A549 (cell line): ENCODE measurements at regions of chr1 and their contacts with region 1.

Region 1: GRCh38 chr1:203504397-203505250 is 10.7 kb downstream of the OPTC start:
- DNase-seq: peak; percentile 75 to 90
- ATAC-seq: peak; percentile 87 to 94
- H3K4me3 ChIP-seq: no peak overlapping the region
- H3K27ac ChIP-seq: peak overlapping the region in 1 of 2 experiments; percentile 24; a peak in 2 of 6 replicates
- H3K4me1 ChIP-seq: peaks cover 22% of the 10 kb centered on the region
- CTCF ChIP-seq: peak; percentile 89
- EP300 ChIP-seq: no peak
- POLR2A ChIP-seq: no peak
- RAD21 ChIP-seq: peak; percentile 87 to 98

Region 2: DNA sequence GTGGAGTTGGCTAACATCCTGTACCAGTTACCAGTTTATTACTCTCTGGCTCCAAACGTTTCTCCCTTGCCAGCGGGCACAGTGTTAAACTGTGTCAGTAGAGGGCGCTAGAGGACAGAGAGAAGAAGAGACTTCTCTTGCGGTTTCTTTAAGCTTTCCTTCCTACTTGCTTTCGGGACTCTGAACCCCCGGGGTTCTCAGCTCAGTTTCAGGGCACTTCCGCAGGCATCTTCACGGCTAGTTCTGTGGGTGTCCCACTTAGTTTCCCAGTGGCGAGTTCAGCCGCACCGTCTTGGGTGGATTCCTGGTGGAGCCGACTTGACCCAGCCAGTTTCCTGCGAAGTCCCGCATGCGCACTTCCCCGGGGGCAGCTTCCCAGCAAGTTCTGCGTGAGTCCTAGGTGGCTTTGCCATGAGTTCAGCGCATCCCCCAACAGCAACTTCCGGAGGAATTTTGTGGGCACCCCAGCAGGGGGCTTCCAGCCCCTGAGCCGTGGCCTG is 237.2 kb before region 1 on chr1:
- CTCF ChIA-PET with region 1: interaction called, 10 read pairs
- POLR2A ChIA-PET with region 1: no interaction called
- DNase-seq: peak; percentile 85 to 89
- ATAC-seq: peak; percentile 76 to 83
- H3K4me3 ChIP-seq: peak overlapping the region; percentile 53
- H3K27ac ChIP-seq: peak overlapping the region; percentile 85 to 91
- H3K4me1 ChIP-seq: peaks cover 7% of the 10 kb centered on the region; the same call in 1 of the 3 replicates
- CTCF ChIP-seq: peak; percentile 95
- EP300 ChIP-seq: no peak
- POLR2A ChIP-seq: peak; percentile 61
- RAD21 ChIP-seq: peak; percentile 77 to 79

Region 3: DNA sequence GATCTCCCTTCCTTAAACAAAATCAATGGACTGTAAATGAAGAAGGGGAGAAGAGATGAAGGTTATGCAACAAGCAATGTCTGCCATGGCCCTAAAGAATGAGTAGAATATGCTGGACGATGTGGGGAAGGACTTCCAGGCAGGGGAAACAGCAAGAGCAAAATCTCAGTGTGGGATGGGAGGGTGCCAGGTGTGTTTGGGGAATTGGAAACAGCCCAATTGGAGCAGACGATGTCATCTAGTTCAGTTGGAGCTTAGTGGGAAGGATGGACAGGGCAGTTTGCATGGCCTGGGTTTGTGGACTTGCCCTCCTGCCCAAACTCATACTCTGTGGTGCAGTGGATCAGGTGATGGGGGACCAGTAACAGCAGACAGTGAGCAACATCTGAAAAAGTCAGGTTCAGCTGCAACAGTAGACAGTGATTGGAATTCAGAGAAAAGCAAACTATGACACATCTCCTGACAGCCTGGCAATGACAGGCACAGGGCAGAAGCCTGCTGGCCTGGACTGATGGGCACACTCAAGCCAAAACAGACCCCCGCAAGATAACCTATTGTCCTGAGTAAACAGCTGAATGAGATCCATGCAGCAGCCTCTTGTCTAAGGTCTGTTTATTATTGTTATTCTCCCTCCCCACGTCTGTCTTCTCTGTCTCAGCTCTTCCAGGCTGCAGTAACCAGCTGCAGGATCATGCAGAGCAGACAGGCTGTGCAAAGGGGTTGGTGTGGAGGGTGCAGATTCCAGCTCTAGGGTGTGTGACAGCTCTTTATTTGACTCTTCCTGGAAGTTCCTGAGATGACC is 79.6 kb before region 1 on chr1:
- CTCF ChIA-PET with region 1: no interaction called
- POLR2A ChIA-PET with region 1: no interaction called
- DNase-seq: no peak
- ATAC-seq: peak; percentile 63 to 72; a peak in 5 of 6 replicates
- H3K4me3 ChIP-seq: no peak overlapping the region
- H3K27ac ChIP-seq: no peak overlapping the region
- H3K4me1 ChIP-seq: peaks cover 13% of the 10 kb centered on the region; the same call in 2 of the 3 replicates
- CTCF ChIP-seq: no peak
- EP300 ChIP-seq: no peak
- POLR2A ChIP-seq: no peak
- RAD21 ChIP-seq: no peak

Region 4: GRCh38 chr1:203473281-203473680 is 31.3 kb before region 1 on chr1:
- CTCF ChIA-PET with region 1: no interaction called
- POLR2A ChIA-PET with region 1: no interaction called
- DNase-seq: no peak
- ATAC-seq: no peak
- H3K4me3 ChIP-seq: no peak overlapping the region
- H3K27ac ChIP-seq: no peak overlapping the region
- H3K4me1 ChIP-seq: no peaks in the 10 kb centered on the region
- CTCF ChIP-seq: no peak
- EP300 ChIP-seq: no peak
- POLR2A ChIP-seq: no peak
- RAD21 ChIP-seq: no peak

Region 5: DNA sequence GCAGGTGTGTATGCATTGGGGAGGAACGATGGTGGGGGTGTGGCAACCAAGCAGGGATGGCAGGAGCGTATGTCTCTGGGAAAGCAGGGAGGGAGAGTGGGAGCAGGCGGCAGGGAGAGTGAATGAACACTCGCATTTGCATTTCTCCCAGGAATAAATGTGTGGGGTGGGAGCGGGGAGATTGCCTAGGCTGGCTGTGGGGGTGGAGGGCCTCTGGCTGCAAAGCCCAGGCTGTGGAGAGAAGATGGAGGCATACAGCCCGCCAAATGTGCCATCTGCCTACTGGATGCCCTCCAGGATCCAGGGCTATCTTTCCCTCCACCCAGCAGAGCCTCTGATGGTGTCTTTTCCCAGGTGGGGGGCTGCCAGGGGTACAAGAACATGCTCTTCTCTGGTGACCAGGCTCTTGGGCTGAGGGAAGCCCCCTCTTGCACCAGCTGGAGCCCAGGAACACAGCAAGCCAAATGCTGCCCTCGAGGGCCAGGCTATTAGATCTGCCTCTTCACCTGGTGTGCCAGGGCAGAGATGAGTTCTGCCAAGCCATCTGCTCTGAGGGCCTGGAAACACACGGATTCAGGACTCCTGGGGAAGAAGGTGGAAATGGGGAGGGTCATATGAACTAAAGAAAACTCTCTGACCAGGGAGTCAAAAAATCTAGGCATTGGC is 12.4 kb before region 1 on chr1:
- CTCF ChIA-PET with region 1: interaction called, 39 read pairs
- POLR2A ChIA-PET with region 1: no interaction called
- DNase-seq: no peak
- ATAC-seq: no peak
- H3K4me3 ChIP-seq: no peak overlapping the region
- H3K27ac ChIP-seq: no peak overlapping the region
- H3K4me1 ChIP-seq: peaks cover 5% of the 10 kb centered on the region; the same call in 1 of the 3 replicates
- CTCF ChIP-seq: no peak
- EP300 ChIP-seq: no peak
- POLR2A ChIP-seq: no peak
- RAD21 ChIP-seq: no peak

Region 6: DNA sequence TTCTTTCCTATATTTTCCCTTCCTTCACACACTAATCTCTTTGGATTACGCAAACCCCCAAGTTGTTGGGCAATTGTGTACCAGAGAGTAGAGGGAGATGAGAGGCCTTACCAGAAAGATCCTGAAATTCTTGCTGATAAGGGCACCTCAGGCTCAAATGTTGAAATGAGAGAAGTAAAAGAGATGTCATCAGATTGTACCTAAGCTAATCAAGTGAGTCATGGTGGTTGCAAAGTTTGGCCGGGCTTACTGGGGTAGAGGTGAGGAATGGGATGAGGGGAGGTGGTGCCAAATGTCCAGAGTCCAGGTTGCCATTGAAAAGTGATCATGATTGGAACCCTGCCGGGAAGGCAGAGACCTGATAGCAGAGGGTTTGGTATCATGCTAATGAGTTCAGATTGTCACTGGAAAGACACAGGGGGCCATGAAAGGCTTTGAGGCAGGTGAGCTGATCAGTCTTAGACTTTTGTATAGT is 32.4 kb after region 1 on chr1:
- CTCF ChIA-PET with region 1: interaction called, 21 read pairs
- POLR2A ChIA-PET with region 1: no interaction called
- DNase-seq: peak in 1 of 2 experiments; percentile 72
- ATAC-seq: peak; percentile 71 to 85
- H3K4me3 ChIP-seq: peak overlapping the region; percentile 14; the same call in 1 of the 3 replicates
- H3K27ac ChIP-seq: peak overlapping the region; percentile 72 to 84
- H3K4me1 ChIP-seq: peaks cover 56% of the 10 kb centered on the region
- CTCF ChIP-seq: no peak
- EP300 ChIP-seq: peak; percentile 68 to 85; a peak in 3 of 5 replicates
- POLR2A ChIP-seq: no peak
- RAD21 ChIP-seq: peak in 1 of 2 experiments; percentile 52; a peak in 2 of 5 replicates

Region 7: DNA sequence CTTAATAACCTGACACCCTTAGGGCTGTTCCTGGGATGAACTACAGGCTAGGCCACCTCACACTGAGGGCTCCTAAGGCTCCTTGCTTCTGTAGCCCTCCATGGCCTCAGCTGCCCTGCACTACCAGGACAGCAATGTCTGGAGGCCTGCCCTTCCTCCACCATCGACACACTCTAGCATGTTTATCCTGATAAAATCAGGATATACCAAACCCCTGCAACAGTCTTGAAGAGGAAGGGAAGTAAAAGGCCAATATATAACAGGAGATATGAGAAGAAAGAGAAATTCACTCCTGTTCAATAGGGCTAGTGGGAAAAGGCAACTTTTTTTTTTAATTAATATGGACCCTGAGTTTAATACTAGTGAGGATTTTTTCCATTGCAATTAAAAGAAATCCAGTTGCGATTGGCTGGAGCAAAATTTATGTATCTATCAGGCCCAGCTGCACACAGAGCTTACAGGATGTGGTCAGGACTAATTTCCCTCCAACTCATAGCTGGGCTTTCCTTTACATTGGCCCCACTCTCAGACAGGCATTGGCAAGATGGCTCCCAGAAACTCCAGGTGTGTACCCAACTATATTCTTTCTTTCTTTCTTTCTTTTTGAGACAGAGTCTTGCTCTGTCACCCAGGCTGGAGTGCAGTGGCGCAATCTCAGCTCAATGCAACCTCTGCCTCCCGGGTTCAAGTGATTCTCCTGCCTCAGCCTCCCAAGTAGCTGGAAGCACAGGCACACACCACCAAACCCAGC is 108.5 kb after region 1 on chr1:
- CTCF ChIA-PET with region 1: interaction called, 50 read pairs
- POLR2A ChIA-PET with region 1: no interaction called
- DNase-seq: no peak
- ATAC-seq: no peak
- H3K4me3 ChIP-seq: no peak overlapping the region
- H3K27ac ChIP-seq: no peak overlapping the region
- H3K4me1 ChIP-seq: no peaks in the 10 kb centered on the region
- CTCF ChIP-seq: no peak
- EP300 ChIP-seq: no peak
- POLR2A ChIP-seq: no peak
- RAD21 ChIP-seq: no peak

Region 8: DNA sequence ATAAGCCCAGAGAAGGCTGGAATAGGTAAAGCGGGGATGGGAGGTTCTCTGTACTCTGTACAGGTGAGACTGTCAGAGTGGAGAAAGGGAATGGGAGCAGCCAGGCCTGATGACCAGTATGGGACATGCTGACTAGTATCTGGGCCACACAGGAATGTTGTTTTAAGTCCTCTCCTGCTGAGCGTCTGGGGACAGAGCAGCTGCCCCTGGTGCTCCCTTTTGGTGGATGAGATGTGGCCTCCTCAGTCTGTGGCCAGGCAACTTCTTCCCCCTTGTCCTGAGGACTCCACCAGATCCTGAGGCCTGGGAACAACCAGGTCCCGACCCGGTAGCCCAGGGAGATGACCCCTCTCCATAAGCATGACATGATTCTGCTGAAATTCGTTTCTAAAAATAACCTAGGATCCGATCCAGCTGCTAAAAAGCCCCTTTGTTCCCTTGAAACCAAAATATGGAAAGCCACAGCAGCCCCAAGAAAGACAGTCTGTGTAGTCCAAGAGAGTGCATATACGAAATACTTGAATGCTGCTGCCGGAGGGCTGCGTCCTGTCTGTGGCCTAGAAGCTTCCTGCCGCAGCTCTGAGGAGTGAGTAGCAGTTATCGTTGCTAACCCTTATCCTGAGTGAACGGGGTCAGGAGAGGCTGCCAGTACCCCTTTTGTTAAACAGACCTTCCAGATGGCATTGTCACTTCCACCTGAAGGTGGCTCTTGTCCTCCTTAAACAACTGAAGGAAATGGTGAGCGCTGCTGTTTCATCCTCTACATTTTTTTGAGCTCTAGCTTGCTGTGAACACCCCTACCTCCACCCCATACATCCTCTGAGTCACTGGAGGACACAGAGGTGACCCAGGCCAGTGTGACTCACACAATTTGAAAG is 169.2 kb after region 1 on chr1:
- CTCF ChIA-PET with region 1: interaction called, 25 read pairs
- POLR2A ChIA-PET with region 1: interaction called, 3 read pairs
- DNase-seq: peak; percentile 85 to 87
- ATAC-seq: peak; percentile 92 to 93
- H3K4me3 ChIP-seq: no peak overlapping the region
- H3K27ac ChIP-seq: peak overlapping the region; percentile 49 to 80
- H3K4me1 ChIP-seq: peaks cover 36% of the 10 kb centered on the region
- CTCF ChIP-seq: peak; percentile 38; the same call in 2 of the 3 replicates
- EP300 ChIP-seq: no peak
- POLR2A ChIP-seq: no peak
- RAD21 ChIP-seq: peak; percentile 52 to 55